Right ventricle myocardium inferior (tissue), 1 donor: ENCODE measurements at regions of chr18 and their contacts with region 1.

Region 1: GRCh38 chr18:24271381-24272331 is 126.0 kb downstream of the OSBPL1A start:
- DNase-seq: peak; percentile 91
- ATAC-seq: peak; percentile 87

Region 2: GRCh38 chr18:24176727-24177416 is 94.8 kb before region 1 on chr18:
- intact Hi-C with region 1: loop called (anchors 1 kb)
- DNase-seq: peak; percentile 71
- ATAC-seq: peak; percentile 69

Region 3: DNA sequence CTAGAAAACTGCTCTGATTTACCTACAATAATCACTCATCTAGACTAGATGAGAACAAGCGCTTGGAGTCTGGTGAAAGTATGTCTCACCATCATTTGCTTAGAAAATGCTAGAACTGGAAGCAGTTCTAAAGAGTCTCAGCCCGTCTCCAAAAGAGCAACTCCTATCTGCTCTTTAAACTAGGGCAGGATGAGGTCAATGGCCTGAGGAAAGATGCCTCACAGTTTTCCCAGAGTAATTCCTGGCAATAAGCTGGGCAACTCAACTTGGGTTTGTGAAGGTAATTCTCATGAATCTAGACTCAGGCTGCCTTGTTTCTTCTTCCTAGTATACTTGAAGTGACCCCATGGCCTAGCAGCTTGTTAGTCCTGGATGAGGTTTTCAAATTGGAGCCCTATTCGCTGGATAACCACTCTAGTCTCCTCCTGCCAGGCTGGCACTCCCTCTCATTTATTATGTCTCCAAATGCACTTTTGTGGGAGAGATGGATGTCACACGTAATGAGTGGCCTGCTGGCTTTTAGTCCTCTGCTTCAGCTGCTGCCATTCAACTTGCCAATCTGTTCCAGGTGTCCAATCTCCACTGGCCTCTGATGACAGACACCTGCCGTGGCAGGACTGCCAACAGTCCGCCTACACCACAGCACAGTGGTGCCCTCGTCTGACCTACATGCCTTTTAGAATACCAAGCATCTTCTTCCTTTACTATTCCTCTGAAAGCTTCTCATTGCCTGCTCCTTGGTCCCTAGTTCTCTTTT is 51.9 kb before region 1 on chr18:
- intact Hi-C with region 1: no loop called
- DNase-seq: no peak
- ATAC-seq: peak; percentile 78

Region 4: GRCh38 chr18:24234330-24234729 is 37.3 kb before region 1 on chr18:
- intact Hi-C with region 1: loop called (anchors 2 kb)
- DNase-seq: no peak
- ATAC-seq: no peak

Region 5: DNA sequence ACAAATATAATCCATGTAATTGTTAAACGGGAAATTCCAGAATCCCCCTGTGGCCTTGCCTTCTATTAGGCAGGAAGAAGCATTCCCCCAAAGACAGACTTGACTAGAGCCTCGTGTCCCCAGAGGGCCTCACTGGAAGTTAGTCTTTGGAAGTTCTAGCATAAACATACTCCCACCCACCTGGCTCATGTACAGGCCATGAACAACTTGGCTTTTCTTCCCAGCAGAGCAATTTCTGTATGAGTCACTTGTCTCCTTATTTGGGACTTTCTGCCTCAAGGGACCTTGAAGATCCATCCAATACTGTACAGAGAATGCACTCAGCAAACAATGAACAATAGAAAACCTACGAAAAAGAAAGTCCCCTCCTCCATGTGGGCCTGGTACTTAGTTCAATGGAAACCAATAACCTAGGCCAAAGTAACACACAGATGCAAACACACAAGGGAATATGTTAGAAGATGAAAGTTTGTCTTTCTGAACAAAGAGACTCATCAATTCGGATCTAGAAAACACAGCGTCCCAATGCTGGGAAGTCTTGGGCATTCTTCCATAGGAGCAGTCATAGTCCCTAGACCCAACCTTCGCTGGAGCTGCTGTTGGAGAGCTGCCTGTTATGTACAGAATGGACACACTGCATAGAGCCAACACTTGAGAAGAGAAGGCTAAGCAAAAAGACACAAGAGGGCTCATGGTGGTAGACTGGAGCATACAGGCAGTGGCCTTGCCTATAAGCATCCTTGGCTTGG is 492.3 kb after region 1 on chr18:
- intact Hi-C with region 1: no loop called
- DNase-seq: peak; percentile 72
- ATAC-seq: peak; percentile 86